Right ventricle myocardium superior (tissue), 1 donor: ENCODE measurements at regions of chr1 and their contacts with region 1.

Region 1: GRCh38 chr1:152855661-152856060 is 4.1 kb upstream of the LCE7A start:
- DNase-seq: no peak
- ATAC-seq: no peak

Region 2: GRCh38 chr1:152699746-152700145 is 155.9 kb before region 1 on chr1:
- intact Hi-C with region 1: loop called (anchors 10 kb)
- DNase-seq: no peak
- ATAC-seq: no peak

Region 3: DNA sequence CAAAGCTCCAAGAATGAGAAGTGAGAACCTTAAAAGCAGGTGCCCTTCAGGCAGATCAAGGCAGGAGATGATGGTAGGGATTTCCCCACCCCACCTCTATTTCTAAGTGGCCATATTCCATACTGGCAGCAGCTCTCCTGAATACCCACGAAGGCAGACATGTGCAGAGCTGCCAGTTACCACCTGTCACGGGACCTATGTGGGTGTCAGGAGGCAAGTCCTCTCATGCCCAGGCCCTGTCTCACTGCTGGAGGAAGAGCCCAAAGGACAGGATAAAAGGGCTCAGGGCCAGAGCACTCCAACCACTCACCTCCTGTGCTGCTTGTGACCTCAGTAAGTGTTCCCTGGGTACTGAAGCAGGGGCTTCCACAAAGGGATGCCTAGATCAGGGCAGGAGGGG is 44.6 kb before region 1 on chr1:
- intact Hi-C with region 1: no loop called
- DNase-seq: no peak
- ATAC-seq: no peak

Region 4: DNA sequence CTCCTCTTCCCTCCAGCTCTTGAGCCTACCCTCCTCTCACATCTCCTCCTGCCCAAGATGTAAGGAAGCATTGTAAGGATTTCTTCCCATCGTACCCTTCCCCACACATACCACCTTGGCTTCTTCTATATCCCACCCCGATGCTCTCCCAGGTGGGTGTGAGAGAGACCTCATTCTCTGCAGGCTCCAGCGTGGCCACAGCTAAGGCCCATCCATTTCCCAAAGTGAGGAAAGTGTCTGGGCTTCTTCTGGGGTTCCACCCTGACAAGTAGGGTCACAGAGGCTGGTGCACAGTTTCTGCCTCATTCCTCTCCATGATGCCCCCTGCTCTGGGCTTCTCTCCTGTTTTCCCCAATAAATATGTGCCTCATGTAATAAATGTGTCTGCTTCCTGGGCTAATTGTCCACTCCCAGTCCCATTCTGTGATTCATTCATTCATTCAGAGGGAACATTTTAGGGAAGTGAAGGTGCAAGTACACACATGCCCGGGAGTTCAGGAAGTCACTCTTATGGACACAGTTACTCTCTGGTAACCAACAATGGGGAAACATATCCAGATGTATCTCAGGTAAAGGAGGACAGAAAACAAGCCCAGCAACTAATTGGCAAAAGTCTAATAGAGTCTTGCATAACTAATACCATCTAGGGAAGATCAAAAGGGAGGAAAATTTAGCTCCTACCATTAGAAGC is 116.7 kb after region 1 on chr1:
- intact Hi-C with region 1: no loop called
- DNase-seq: no peak
- ATAC-seq: no peak